ENCODE measurements at regions of chr7 and their contacts with region 1.

Region 1: GRCh38 chr7:104883718-104884452 is 130.1 kb upstream of the KMT2E start:
- DNase-seq: peak; percentile 88
- H3K4me3 ChIP-seq: peak overlapping the region; percentile 38
- H3K27ac ChIP-seq: peak overlapping the region; percentile 92
- H3K4me1 ChIP-seq: peaks cover 19% of the 10 kb centered on the region
- H3K27me3 ChIP-seq: no peaks in the 10 kb centered on the region
- CTCF ChIP-seq: peak; percentile 97

Region 2: GRCh38 chr7:104923010-104923421 is 39.1 kb after region 1 on chr7:
- intact Hi-C with region 1: loop called (anchors 5 kb)
- DNase-seq: peak; percentile 54
- H3K4me3 ChIP-seq: no peak overlapping the region
- H3K27ac ChIP-seq: peak overlapping the region; percentile 65
- H3K4me1 ChIP-seq: peaks cover 16% of the 10 kb centered on the region
- H3K27me3 ChIP-seq: no peaks in the 10 kb centered on the region
- CTCF ChIP-seq: peak; percentile 75

Measured in left ventricle myocardium inferior (tissue), 1 donor.